Naive thymus-derived CD4-positive, alpha-beta T cell (primary cell): ENCODE measurements at regions of chr6 and their contacts with region 1.

Region 1: GRCh38 chr6:37190159-37190535 is 20.2 kb downstream of the PIM1 start:
- DNase-seq: no peak
- ATAC-seq: no peak
- H3K4me3 ChIP-seq: no peak overlapping the region
- H3K4me3 Mint-ChIP-seq: peak overlapping the region in 8 of 10 donors; percentile 18 to 67 (median 26)
- H3K27ac ChIP-seq: no peak overlapping the region
- H3K27ac Mint-ChIP-seq: peak overlapping the region in 6 of 9 donors; percentile 30 to 81 (median 56)
- H3K4me1 ChIP-seq: peaks cover 28 to 30% of the 10 kb centered on the region in 2 donors
- H3K4me1 Mint-ChIP-seq: peaks cover 30 to 75% (median 66%) of the 10 kb centered on the region in 7 donors
- H3K27me3 ChIP-seq: no peaks in the 10 kb centered on the region
- H3K27me3 Mint-ChIP-seq: no peaks in the 10 kb centered on the region

Region 2: DNA sequence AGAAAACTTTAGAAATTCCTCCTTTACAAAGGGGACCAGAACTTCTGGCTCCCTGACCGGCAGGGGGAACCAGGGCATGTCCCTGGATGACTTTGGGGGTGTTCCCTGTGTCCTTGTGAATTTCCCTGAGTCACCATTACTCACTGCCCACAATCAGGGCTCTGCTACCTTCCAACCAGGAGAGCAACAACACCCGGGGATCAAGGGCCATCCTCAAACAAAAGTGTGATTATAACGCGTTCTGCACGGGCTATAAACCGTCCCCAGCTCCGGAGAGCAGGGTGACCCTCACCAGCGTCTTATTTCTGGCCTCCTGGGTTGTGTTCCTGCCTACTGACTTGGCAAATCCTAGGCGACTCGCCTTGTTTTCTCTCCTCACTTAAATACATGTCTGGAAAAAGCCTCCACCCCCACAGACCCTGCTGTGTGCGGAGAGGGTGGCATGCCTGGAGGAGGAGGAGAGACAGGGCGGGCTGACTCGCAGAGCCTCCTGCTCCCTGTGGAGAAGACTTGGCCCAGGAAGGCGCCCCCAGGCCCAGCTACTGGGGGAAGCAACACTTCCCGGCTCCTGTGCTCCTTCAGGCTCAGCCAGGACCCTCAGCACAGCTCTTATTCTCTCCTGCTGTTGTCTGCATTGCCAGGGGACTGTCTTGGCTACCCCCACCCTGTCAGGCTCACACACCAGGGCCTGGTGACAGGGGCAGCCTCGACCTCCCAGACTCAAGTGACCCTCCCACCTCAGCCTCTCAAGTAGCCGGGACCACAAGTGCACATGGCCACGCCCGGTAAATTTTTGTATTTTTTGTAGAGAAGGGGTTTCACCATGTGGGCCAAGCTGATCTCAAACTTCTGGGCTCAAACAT is 130.6 kb before region 1 on chr6:
- CTCF ChIA-PET with region 1: no interaction called
- POLR2A ChIA-PET with region 1: no interaction called
- intact Hi-C with region 1: no loop called
- DNase-seq: no peak
- ATAC-seq: peak; percentile 76
- H3K4me3 ChIP-seq: no peak overlapping the region
- H3K4me3 Mint-ChIP-seq: no peak overlapping the region
- H3K27ac ChIP-seq: no peak overlapping the region
- H3K27ac Mint-ChIP-seq: no peak overlapping the region
- H3K4me1 ChIP-seq: no peaks in the 10 kb centered on the region
- H3K4me1 Mint-ChIP-seq: peaks cover 0 to 20% (median 0%) of the 10 kb centered on the region in 7 donors
- H3K27me3 ChIP-seq: no peaks in the 10 kb centered on the region
- H3K27me3 Mint-ChIP-seq: no peaks in the 10 kb centered on the region

Region 3: DNA sequence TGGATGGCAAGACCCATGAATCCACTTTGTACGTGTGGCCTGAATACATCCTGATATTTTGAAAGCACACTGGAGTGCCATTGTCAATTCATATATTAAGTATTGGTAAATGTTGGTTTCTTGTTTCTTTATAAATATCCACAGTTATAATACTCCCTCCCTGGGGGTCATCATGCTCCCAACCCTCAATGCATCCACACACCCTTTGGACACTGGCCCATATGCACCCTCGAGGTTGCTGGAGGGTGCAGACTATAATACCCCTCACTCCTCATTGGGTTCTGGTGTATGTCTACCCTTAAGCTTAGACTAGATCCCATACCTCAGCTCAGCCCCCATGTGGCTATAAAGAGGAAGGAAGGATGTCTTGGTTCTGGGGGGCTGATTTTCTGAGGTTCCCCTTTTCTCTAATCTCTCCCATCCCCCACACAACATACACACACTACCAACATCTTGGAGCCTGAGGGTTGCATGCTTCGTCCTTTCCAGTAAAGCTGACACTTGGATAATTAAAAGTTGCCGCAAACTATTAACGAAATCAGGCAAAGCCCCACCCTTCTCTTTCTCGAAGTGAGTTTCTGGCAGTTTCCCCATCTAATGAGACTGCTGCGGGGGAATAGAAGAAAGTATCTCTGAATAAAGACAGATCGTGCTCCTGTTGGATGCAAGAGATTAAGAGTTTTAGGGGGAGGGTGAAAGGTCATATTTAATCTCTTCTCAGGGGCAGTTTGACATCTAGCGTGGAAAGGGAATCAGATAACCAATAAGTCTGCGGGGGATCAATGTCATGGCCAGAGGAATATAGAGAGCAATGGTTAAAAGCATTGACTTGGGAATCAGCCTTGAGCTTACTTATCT is 12.8 kb before region 1 on chr6:
- CTCF ChIA-PET with region 1: interaction called, 12 read pairs
- POLR2A ChIA-PET with region 1: interaction called, 40 read pairs
- intact Hi-C with region 1: no loop called
- DNase-seq: no peak
- ATAC-seq: peak; percentile 52
- H3K4me3 ChIP-seq: no peak overlapping the region
- H3K4me3 Mint-ChIP-seq: peak overlapping the region in 9 of 10 donors; percentile 25 to 99 (median 43)
- H3K27ac ChIP-seq: peak overlapping the region; percentile 77
- H3K27ac Mint-ChIP-seq: peak overlapping the region; percentile 73 to 96 (median 93)
- H3K4me1 ChIP-seq: peaks cover 54 to 67% of the 10 kb centered on the region in 2 donors
- H3K4me1 Mint-ChIP-seq: peaks cover 46 to 78% (median 72%) of the 10 kb centered on the region in 7 donors
- H3K27me3 ChIP-seq: no peaks in the 10 kb centered on the region
- H3K27me3 Mint-ChIP-seq: no peaks in the 10 kb centered on the region

Region 4: GRCh38 chr6:37202788-37203491 is 12.8 kb after region 1 on chr6:
- CTCF ChIA-PET with region 1: interaction called, 11 read pairs
- POLR2A ChIA-PET with region 1: interaction called, 20 read pairs
- intact Hi-C with region 1: loop called (anchors 1 to 2 kb)
- DNase-seq: peak in 2 of 9 donors; percentile 17 to 24
- ATAC-seq: peak; percentile 61
- H3K4me3 ChIP-seq: peak overlapping the region; percentile 5
- H3K4me3 Mint-ChIP-seq: peak overlapping the region in 8 of 10 donors; percentile 1 to 64 (median 42)
- H3K27ac ChIP-seq: peak overlapping the region; percentile 2
- H3K27ac Mint-ChIP-seq: peak overlapping the region; percentile 30 to 90 (median 80)
- H3K4me1 ChIP-seq: peaks cover 29 to 37% of the 10 kb centered on the region in 2 donors
- H3K4me1 Mint-ChIP-seq: peaks cover 33 to 60% (median 51%) of the 10 kb centered on the region in 7 donors
- H3K27me3 ChIP-seq: no peaks in the 10 kb centered on the region
- H3K27me3 Mint-ChIP-seq: no peaks in the 10 kb centered on the region

Region 5: GRCh38 chr6:37691904-37692806 is 502.0 kb after region 1 on chr6:
- CTCF ChIA-PET with region 1: no interaction called
- POLR2A ChIA-PET with region 1: no interaction called
- intact Hi-C with region 1: no loop called
- DNase-seq: peak; percentile 46 to 87 (median 72)
- ATAC-seq: peak; percentile 89
- H3K4me3 ChIP-seq: no peak overlapping the region
- H3K4me3 Mint-ChIP-seq: peak overlapping the region in 1 of 10 donors; percentile 45
- H3K27ac ChIP-seq: no peak overlapping the region
- H3K27ac Mint-ChIP-seq: no peak overlapping the region
- H3K4me1 ChIP-seq: peaks cover 11 to 12% of the 10 kb centered on the region in 2 donors
- H3K4me1 Mint-ChIP-seq: peaks cover 9 to 26% (median 21%) of the 10 kb centered on the region in 7 donors
- H3K27me3 ChIP-seq: peaks cover 0 to 4% of the 10 kb centered on the region in 2 donors
- H3K27me3 Mint-ChIP-seq: peaks cover 26 to 45% (median 34%) of the 10 kb centered on the region in 5 donors